ENCODE measurements at regions of chr2 and their contacts with region 1.

Region 1: GRCh38 chr2:36376319-36376765 is 20.8 kb downstream of the CRIM1 start:
- DNase-seq: peak; percentile 75
- H3K4me3 Mint-ChIP-seq: peak overlapping the region; percentile 34
- H3K27ac Mint-ChIP-seq: peak overlapping the region; percentile 78
- H3K4me1 Mint-ChIP-seq: peaks cover 72% of the 10 kb centered on the region
- H3K27me3 Mint-ChIP-seq: no peaks in the 10 kb centered on the region
- CTCF ChIP-seq: no peak

Region 2: GRCh38 chr2:36343606-36344005 is 32.7 kb before region 1 on chr2:
- CTCF ChIA-PET with region 1: no interaction called
- POLR2A ChIA-PET with region 1: no interaction called
- intact Hi-C with region 1: no loop called
- DNase-seq: no peak
- H3K4me3 Mint-ChIP-seq: no peak overlapping the region
- H3K27ac Mint-ChIP-seq: no peak overlapping the region
- H3K4me1 Mint-ChIP-seq: peaks cover 4% of the 10 kb centered on the region
- H3K27me3 Mint-ChIP-seq: peaks cover 12% of the 10 kb centered on the region
- CTCF ChIP-seq: no peak

Region 3: DNA sequence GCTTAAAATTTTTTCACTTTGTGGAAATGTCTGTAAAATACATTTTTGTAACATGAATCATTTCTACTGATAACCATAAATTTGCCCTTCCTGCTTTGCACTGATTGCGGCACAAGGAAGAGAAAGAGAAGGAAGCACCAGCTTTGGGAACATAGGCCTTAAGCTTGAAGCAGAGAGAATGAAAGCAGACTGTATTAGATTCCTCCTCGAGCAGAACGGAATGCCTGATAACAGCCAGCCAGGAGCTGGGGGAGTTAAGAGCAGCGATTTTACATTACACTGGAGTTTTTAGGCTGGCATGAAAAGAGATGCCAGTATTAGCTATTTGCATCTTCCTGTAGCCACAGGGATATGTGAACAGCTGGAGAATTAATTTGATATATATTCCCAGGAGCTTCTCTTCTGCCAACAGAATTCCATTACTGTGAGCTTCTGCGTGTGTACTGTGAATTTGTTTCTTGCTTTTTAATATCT is 12.8 kb after region 1 on chr2:
- CTCF ChIA-PET with region 1: interaction called, 9 read pairs
- POLR2A ChIA-PET with region 1: interaction called, 38 read pairs
- intact Hi-C with region 1: no loop called
- DNase-seq: no peak
- H3K4me3 Mint-ChIP-seq: no peak overlapping the region
- H3K27ac Mint-ChIP-seq: no peak overlapping the region
- H3K4me1 Mint-ChIP-seq: peaks cover 28% of the 10 kb centered on the region
- H3K27me3 Mint-ChIP-seq: no peaks in the 10 kb centered on the region
- CTCF ChIP-seq: no peak

Region 4: GRCh38 chr2:36403675-36404230 is 27.4 kb after region 1 on chr2:
- CTCF ChIA-PET with region 1: interaction called, 3 read pairs
- POLR2A ChIA-PET with region 1: interaction called, 36 read pairs
- intact Hi-C with region 1: no loop called
- DNase-seq: peak; percentile 75
- H3K4me3 Mint-ChIP-seq: no peak overlapping the region
- H3K27ac Mint-ChIP-seq: no peak overlapping the region
- H3K4me1 Mint-ChIP-seq: peaks cover 12% of the 10 kb centered on the region
- H3K27me3 Mint-ChIP-seq: no peaks in the 10 kb centered on the region
- CTCF ChIP-seq: no peak

Region 5: GRCh38 chr2:36450466-36451196 is 74.3 kb after region 1 on chr2:
- CTCF ChIA-PET with region 1: interaction called, 3 read pairs
- POLR2A ChIA-PET with region 1: interaction called, 25 read pairs
- intact Hi-C with region 1: no loop called
- DNase-seq: peak; percentile 59
- H3K4me3 Mint-ChIP-seq: no peak overlapping the region
- H3K27ac Mint-ChIP-seq: peak overlapping the region; percentile 5
- H3K4me1 Mint-ChIP-seq: peaks cover 37% of the 10 kb centered on the region
- H3K27me3 Mint-ChIP-seq: no peaks in the 10 kb centered on the region
- CTCF ChIP-seq: no peak

Region 6: GRCh38 chr2:36461039-36461681 is 84.8 kb after region 1 on chr2:
- CTCF ChIA-PET with region 1: interaction called, 82 read pairs
- POLR2A ChIA-PET with region 1: interaction called, 48 read pairs
- intact Hi-C with region 1: no loop called
- DNase-seq: peak; percentile 77
- H3K4me3 Mint-ChIP-seq: no peak overlapping the region
- H3K27ac Mint-ChIP-seq: no peak overlapping the region
- H3K4me1 Mint-ChIP-seq: peaks cover 7% of the 10 kb centered on the region
- H3K27me3 Mint-ChIP-seq: no peaks in the 10 kb centered on the region
- CTCF ChIP-seq: no peak

Region 7: DNA sequence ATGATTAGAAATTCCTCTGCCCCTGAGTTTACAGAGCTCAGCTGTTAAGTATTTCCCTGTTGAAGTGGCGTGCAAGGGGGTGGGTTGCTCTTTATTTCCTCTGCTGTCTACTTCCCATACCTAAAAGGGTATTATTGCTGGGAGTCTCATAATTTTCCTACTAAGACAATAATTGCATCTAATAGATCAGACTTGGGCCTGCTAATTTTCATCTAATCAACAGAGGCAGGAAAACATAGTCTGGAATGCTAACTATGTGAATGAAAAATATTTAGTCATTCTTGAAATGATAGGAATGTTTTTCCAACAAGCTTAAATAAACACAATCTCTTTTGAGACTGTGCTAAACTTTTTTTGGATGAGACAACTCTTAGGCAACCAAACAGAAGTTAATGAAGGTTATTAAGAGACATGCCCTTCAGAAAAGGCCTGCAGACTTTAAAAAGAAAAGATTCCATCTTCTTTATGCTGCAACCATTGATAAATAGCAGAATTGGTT is 110.3 kb after region 1 on chr2:
- CTCF ChIA-PET with region 1: interaction called, 6 read pairs
- POLR2A ChIA-PET with region 1: interaction called, 14 read pairs
- intact Hi-C with region 1: no loop called
- DNase-seq: peak; percentile 50
- H3K4me3 Mint-ChIP-seq: peak overlapping the region; percentile 20
- H3K27ac Mint-ChIP-seq: peak overlapping the region; percentile 61
- H3K4me1 Mint-ChIP-seq: peaks cover 51% of the 10 kb centered on the region
- H3K27me3 Mint-ChIP-seq: no peaks in the 10 kb centered on the region
- CTCF ChIP-seq: no peak

Region 8: GRCh38 chr2:36507408-36507812 is 131.1 kb after region 1 on chr2:
- CTCF ChIA-PET with region 1: interaction called, 19 read pairs
- POLR2A ChIA-PET with region 1: interaction called, 4 read pairs
- intact Hi-C with region 1: no loop called
- DNase-seq: peak; percentile 82
- H3K4me3 Mint-ChIP-seq: no peak overlapping the region
- H3K27ac Mint-ChIP-seq: peak overlapping the region; percentile 12
- H3K4me1 Mint-ChIP-seq: no peaks in the 10 kb centered on the region
- H3K27me3 Mint-ChIP-seq: no peaks in the 10 kb centered on the region
- CTCF ChIP-seq: peak; percentile 84

Measured in MCF 10A (cell line).